Calu3 (cell line): ENCODE measurements at regions of chr22 and their contacts with region 1.

Region 1: GRCh38 chr22:40449676-40450035 is 79.3 kb downstream of the SGSM3 start:
- DNase-seq: no peak
- H3K4me3 Mint-ChIP-seq: no peak overlapping the region
- H3K27ac Mint-ChIP-seq: peak overlapping the region; percentile 31
- H3K4me1 Mint-ChIP-seq: no peaks in the 10 kb centered on the region
- H3K27me3 Mint-ChIP-seq: no peaks in the 10 kb centered on the region
- CTCF ChIP-seq: no peak

Region 2: DNA sequence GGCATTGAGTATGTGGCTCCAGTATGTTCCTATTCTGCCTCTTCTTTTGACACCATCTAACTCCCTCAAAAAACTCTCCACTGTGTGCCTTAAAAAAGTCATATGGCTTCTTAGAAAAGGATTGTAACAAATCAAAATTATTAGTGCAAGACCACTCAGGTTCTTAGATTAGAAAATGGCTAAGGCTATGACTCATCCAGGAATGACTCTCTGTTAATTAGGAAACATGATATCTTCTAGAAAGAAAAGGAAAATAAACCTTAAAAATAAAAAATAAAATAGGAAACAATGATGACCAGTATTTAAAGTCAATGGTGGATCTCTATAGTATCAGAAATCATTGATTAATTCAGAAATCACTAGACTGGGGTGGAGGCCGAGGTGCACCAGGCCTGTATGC is 347.8 kb after region 1 on chr22:
- CTCF ChIA-PET with region 1: interaction called, 11 read pairs
- intact Hi-C with region 1: no loop called
- DNase-seq: no peak
- H3K4me3 Mint-ChIP-seq: no peak overlapping the region
- H3K27ac Mint-ChIP-seq: no peak overlapping the region
- H3K4me1 Mint-ChIP-seq: no peaks in the 10 kb centered on the region
- H3K27me3 Mint-ChIP-seq: no peaks in the 10 kb centered on the region
- CTCF ChIP-seq: no peak